AG04449 (cell line): ENCODE measurements at regions of chr5 and their contacts with region 1.

Region 1: GRCh38 chr5:113612060-113612496 is 98.6 kb downstream of the YTHDC2 start:
- DNase-seq: no peak
- H3K4me3 ChIP-seq: no peak overlapping the region
- CTCF ChIP-seq: peak; percentile 31

Region 2: DNA sequence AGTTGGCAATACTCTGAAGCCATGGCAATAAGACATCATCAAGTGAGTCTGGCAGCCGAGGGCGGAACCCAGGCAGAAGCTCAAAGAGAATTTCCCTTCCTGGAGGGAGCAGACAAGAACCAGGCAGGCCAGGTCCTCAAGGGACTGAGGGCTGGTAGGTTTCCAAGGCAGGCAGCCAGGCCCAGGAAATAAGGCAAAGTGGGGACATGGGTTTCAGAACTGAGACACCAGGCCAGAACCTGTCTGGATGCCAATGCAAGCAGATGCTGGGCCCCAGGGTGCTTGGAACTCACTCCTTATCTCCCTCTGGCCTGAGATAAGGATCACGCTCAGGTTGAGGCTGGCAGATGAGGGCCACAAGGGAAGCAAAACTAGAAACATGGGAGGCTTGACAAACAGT is 186.2 kb before region 1 on chr5:
- CTCF ChIA-PET with region 1: no interaction called
- POLR2A ChIA-PET with region 1: no interaction called
- DNase-seq: no peak
- H3K4me3 ChIP-seq: no peak overlapping the region
- CTCF ChIP-seq: no peak

Region 3: DNA sequence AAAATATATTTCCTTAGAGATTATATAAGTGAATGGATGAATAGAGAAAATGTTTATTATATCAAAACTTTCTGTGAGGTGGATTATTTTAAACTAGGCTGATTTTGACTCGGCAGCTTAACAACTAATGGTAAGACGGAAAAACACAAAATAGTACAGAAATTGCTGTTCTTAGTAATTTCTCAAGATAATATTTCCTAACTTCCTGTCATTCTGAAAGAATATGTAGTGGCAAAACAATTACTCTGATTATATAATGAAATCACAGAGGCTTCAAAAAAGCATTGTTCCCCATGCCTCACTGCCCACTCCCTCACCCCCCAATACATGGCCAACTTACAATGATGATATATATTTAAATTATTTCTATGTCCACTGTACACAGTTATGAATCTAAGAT is 13.2 kb before region 1 on chr5:
- CTCF ChIA-PET with region 1: interaction called, 33 read pairs
- POLR2A ChIA-PET with region 1: no interaction called
- DNase-seq: no peak
- H3K4me3 ChIP-seq: no peak overlapping the region
- CTCF ChIP-seq: no peak

Region 4: DNA sequence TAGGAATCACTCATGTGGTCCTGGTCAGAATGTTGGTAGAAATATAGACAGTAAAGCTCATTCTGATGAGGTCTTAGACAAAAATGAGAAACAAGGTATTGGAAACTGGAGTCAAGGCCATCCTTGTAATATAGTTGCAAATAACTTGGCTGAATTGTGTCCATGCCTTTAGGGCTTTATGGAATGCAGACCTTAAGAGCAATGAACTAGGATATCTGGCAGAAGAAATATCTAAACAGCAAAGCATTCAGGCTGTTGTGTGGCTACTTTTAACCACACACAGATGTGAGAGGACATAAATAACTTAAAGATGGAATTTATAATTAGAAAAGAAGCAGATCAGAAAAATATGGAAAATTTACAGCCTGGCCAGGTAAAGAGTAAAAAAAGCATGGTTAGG is 29.6 kb after region 1 on chr5:
- CTCF ChIA-PET with region 1: no interaction called
- POLR2A ChIA-PET with region 1: no interaction called
- DNase-seq: no peak
- H3K4me3 ChIP-seq: no peak overlapping the region
- CTCF ChIP-seq: no peak

Region 5: DNA sequence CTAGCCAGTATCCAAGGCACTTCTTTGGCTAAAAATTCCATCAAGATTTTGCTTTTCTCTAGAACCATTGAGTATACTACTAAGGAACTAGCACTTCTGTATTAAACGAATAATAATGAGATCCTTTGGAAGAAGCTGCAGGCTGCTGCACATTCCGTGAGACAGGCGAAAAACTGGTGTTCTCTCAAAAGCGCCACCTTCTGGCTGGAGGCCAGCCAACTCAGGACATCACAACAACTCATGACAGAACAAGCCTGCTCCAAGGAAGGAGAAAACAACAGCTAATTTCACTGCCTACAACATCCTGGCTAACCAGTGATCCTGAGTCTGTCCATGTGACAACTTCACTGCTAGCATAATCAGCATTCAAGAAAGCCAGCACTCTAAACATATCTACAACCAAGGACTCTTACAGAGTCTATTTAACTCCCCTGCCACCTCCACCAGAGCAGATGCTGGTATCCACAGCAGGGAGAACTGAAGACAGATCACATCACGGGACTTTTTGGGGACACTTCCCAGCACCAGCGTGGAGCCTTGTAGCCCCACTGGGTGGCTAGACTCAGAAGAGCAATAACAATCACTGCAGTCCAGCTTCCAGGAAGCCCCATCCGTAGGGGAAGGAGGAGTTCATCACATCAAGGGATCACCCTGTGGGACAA is 51.9 kb after region 1 on chr5:
- CTCF ChIA-PET with region 1: interaction called, 85 read pairs
- POLR2A ChIA-PET with region 1: no interaction called
- DNase-seq: no peak
- H3K4me3 ChIP-seq: no peak overlapping the region
- CTCF ChIP-seq: peak; percentile 69

Region 6: GRCh38 chr5:113723021-113723420 is 110.9 kb after region 1 on chr5:
- CTCF ChIA-PET with region 1: no interaction called
- POLR2A ChIA-PET with region 1: no interaction called
- DNase-seq: no peak
- H3K4me3 ChIP-seq: no peak overlapping the region
- CTCF ChIP-seq: no peak

Region 7: DNA sequence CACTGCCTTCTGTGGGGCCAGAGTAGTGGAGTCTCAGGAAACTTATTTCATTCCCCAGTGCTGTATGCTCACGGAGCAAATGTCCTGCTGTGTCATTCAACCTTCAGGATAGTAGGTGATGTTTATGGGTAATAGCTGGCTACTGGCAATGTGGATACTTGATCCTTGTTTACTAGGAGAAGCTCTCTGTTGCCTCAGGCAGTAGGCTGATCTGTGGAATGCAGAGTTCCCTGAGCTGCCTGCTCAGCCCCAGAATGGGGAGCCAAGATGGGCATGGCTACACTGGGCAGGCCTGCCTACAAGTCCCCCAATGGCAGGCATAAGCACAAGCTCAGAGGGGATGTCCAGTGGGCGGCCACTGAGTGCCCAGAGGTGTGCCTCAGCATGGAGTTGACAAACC is 426.7 kb after region 1 on chr5:
- CTCF ChIA-PET with region 1: no interaction called
- POLR2A ChIA-PET with region 1: no interaction called
- DNase-seq: no peak
- H3K4me3 ChIP-seq: no peak overlapping the region
- CTCF ChIP-seq: no peak

Region 8: GRCh38 chr5:115069087-115069968 is 1457.2 kb after region 1 on chr5:
- CTCF ChIA-PET with region 1: interaction called, 24 read pairs
- POLR2A ChIA-PET with region 1: no interaction called
- DNase-seq: peak; percentile 41
- H3K4me3 ChIP-seq: no peak overlapping the region
- CTCF ChIP-seq: peak; percentile 55